ENCODE measurements at regions of chr10 and their contacts with region 1.

Region 1: GRCh38 chr10:23438550-23439441 is at the start of gene OTUD1:
- DNase-seq: peak; percentile 89 to 99 (median 95)
- ATAC-seq: peak; percentile 96
- H3K4me3 ChIP-seq: peak within 1 kb of the TSS; percentile 96
- H3K4me3 Mint-ChIP-seq: peak within 1 kb of the TSS; percentile 81 to 99 (median 90)
- H3K27ac ChIP-seq: peak within 1 kb of the TSS; percentile 92
- H3K27ac Mint-ChIP-seq: peak within 1 kb of the TSS; percentile 89 to 96 (median 94)
- H3K4me1 ChIP-seq: peaks cover 27 to 29% of the 10 kb centered on the region in 2 donors
- H3K4me1 Mint-ChIP-seq: peaks cover 28 to 44% (median 39%) of the 10 kb centered on the region in 7 donors
- H3K27me3 ChIP-seq: no peaks in the 10 kb centered on the region
- H3K27me3 Mint-ChIP-seq: peaks cover 0 to 8% (median 0%) of the 10 kb centered on the region in 5 donors
- total RNA-seq, gene OTUD1: 20.7 to 118 (median 44.5) TPM

Region 2: GRCh38 chr10:22228943-22229801 is 1209.6 kb before region 1 on chr10:
- CTCF ChIA-PET with region 1: no interaction called
- POLR2A ChIA-PET with region 1: no interaction called
- intact Hi-C with region 1: loop called in 1 of 2 experiments (anchors 1 kb)
- DNase-seq: peak; percentile 74 to 94 (median 92)
- ATAC-seq: peak; percentile 95
- H3K4me3 ChIP-seq: peak overlapping the region; percentile 85
- H3K4me3 Mint-ChIP-seq: peak overlapping the region; percentile 84 to 99 (median 94)
- H3K27ac ChIP-seq: peak overlapping the region; percentile 70
- H3K27ac Mint-ChIP-seq: peak overlapping the region; percentile 96 to 100 (median 99)
- H3K4me1 ChIP-seq: peaks cover 6 to 8% of the 10 kb centered on the region in 2 donors
- H3K4me1 Mint-ChIP-seq: peaks cover 11 to 27% (median 15%) of the 10 kb centered on the region in 7 donors
- H3K27me3 ChIP-seq: no peaks in the 10 kb centered on the region
- H3K27me3 Mint-ChIP-seq: peaks cover 0 to 20% (median 5%) of the 10 kb centered on the region in 5 donors

Region 3: DNA sequence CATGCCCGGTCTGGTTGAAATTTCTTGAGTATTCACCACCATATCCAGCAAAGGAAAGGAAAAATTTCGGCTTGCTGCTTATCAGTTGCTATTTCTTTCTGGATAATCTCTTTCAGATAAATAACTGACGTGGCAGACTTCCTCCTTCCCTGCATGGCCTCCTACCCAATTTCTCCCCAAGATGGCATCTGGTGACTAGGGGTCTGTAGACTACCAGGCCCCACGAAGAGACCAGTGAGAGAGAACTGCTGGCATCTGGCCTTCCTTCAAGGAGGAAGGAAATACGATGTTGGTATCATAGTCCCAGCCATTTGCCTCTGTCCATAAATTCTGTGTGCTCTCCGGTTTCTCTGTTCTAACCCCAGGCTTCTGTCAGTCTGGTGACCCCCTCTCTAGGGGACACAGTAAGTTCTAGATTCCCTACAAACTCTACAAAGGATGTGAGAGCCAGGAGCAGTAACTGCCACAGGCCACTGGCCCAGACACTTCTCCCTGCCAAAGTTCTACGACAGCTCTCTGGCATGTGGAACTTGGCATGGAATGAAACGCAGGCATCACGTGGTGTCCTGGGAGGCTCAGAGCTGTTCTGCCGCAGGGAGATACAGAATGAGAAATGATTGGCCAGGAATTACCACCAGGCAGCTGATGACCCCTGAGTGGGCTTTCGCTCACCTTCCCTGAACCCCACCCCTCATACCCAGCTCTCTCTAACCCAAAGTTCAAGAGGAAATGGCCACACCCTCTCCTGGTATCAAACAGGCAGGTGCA is 373.4 kb before region 1 on chr10:
- CTCF ChIA-PET with region 1: no interaction called
- POLR2A ChIA-PET with region 1: no interaction called
- intact Hi-C with region 1: no loop called
- DNase-seq: no peak
- ATAC-seq: no peak
- H3K4me3 ChIP-seq: no peak overlapping the region
- H3K4me3 Mint-ChIP-seq: no peak overlapping the region
- H3K27ac ChIP-seq: no peak overlapping the region
- H3K27ac Mint-ChIP-seq: no peak overlapping the region
- H3K4me1 ChIP-seq: no peaks in the 10 kb centered on the region
- H3K4me1 Mint-ChIP-seq: peaks cover 0 to 2% (median 0%) of the 10 kb centered on the region in 7 donors
- H3K27me3 ChIP-seq: no peaks in the 10 kb centered on the region
- H3K27me3 Mint-ChIP-seq: peaks cover 0 to 6% (median 4%) of the 10 kb centered on the region in 5 donors

Region 4: DNA sequence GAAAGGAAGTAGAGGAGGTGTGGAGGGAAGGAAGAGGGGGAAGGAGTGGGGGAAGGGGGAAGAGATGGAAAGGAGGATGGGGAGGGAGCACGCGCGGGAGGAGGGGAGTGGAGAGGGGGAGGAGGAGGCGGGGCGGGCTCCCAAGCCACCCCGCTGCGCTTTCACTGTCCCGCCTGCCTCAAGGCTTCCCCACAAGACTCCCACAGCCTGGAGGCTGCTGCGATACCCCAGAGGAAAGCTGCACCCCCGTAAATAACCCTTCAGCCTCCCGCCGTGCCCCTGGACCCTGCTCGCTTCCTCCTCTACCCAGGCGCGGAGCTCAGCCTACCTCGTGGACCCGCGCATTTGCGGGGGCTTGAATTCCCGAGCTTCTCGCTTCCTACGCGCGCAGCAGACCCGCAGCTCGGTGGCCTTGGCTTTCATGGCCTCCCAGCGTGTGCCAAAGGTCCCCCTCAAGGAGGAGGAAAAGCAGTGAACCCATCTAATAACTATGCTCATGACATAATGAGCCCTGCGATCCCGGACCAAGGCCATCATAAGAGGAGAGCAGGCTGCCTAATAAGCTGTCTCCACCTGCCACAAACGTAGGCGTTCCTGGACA is 94.5 kb before region 1 on chr10 and contains the start of gene C10orf67:
- CTCF ChIA-PET with region 1: no interaction called
- POLR2A ChIA-PET with region 1: interaction called, 23 read pairs
- intact Hi-C with region 1: loop called (anchors 1 to 2 kb)
- DNase-seq: peak in 4 of 9 donors; percentile 22 to 41 (median 28)
- ATAC-seq: peak; percentile 45
- H3K4me3 ChIP-seq: peak within 1 kb of the TSS; percentile 64
- H3K4me3 Mint-ChIP-seq: peak within 1 kb of the TSS; percentile 84 to 95 (median 92)
- H3K27ac ChIP-seq: peak within 1 kb of the TSS; percentile 27
- H3K27ac Mint-ChIP-seq: peak within 1 kb of the TSS; percentile 41 to 83 (median 81)
- H3K4me1 ChIP-seq: peaks cover 0 to 6% of the 10 kb centered on the region in 2 donors
- H3K4me1 Mint-ChIP-seq: peaks cover 24 to 50% (median 44%) of the 10 kb centered on the region in 7 donors
- H3K27me3 ChIP-seq: no peaks in the 10 kb centered on the region
- H3K27me3 Mint-ChIP-seq: peaks cover 0 to 19% (median 0%) of the 10 kb centered on the region in 5 donors
- total RNA-seq, gene C10orf67: not detected

Region 5: GRCh38 chr10:23448802-23449570 is 10.2 kb after region 1 on chr10:
- CTCF ChIA-PET with region 1: interaction called, 4 read pairs
- POLR2A ChIA-PET with region 1: interaction called, 7 read pairs
- intact Hi-C with region 1: loop called (anchors 1 kb)
- DNase-seq: peak in 7 of 9 donors; percentile 12 to 56 (median 33)
- ATAC-seq: peak; percentile 71
- H3K4me3 ChIP-seq: no peak overlapping the region
- H3K4me3 Mint-ChIP-seq: peak overlapping the region in 5 of 10 donors; percentile 4 to 65 (median 43)
- H3K27ac ChIP-seq: no peak overlapping the region
- H3K27ac Mint-ChIP-seq: peak overlapping the region; percentile 71 to 91 (median 83)
- H3K4me1 ChIP-seq: peaks cover 0 to 6% of the 10 kb centered on the region in 2 donors
- H3K4me1 Mint-ChIP-seq: peaks cover 20 to 43% (median 36%) of the 10 kb centered on the region in 7 donors
- H3K27me3 ChIP-seq: no peaks in the 10 kb centered on the region
- H3K27me3 Mint-ChIP-seq: no peaks in the 10 kb centered on the region

Region 6: GRCh38 chr10:24724381-24725228 is 1285.8 kb after region 1 on chr10:
- CTCF ChIA-PET with region 1: no interaction called
- POLR2A ChIA-PET with region 1: no interaction called
- intact Hi-C with region 1: loop called (anchors 2 to 5 kb)
- DNase-seq: peak; percentile 87 to 94 (median 92)
- ATAC-seq: peak; percentile 93
- H3K4me3 ChIP-seq: peak overlapping the region; percentile 93
- H3K4me3 Mint-ChIP-seq: peak overlapping the region; percentile 89 to 96 (median 94)
- H3K27ac ChIP-seq: peak overlapping the region; percentile 65
- H3K27ac Mint-ChIP-seq: peak overlapping the region; percentile 45 to 96 (median 92)
- H3K4me1 ChIP-seq: peaks cover 0 to 12% of the 10 kb centered on the region in 2 donors
- H3K4me1 Mint-ChIP-seq: peaks cover 6 to 28% (median 19%) of the 10 kb centered on the region in 7 donors
- H3K27me3 ChIP-seq: no peaks in the 10 kb centered on the region
- H3K27me3 Mint-ChIP-seq: peaks cover 0 to 6% (median 0%) of the 10 kb centered on the region in 5 donors